ENCODE measurements at regions of chr19 and their contacts with region 1.

Region 1: GRCh38 chr19:8580710-8581281 is 3.6 kb upstream of the MYO1F start:
- DNase-seq: no peak
- H3K4me3 ChIP-seq: no peak overlapping the region
- H3K27ac ChIP-seq: no peak overlapping the region
- H3K27me3 ChIP-seq: peaks cover 4% of the 10 kb centered on the region
- CTCF ChIP-seq: peak; percentile 98

Region 2: GRCh38 chr19:8269724-8270123 is 311.1 kb before region 1 on chr19:
- CTCF ChIA-PET with region 1: interaction called, 15 read pairs
- POLR2A ChIA-PET with region 1: no interaction called
- DNase-seq: no peak
- H3K4me3 ChIP-seq: no peak overlapping the region
- H3K27ac ChIP-seq: no peak overlapping the region
- H3K27me3 ChIP-seq: peaks cover 2% of the 10 kb centered on the region
- CTCF ChIP-seq: no peak

Region 3: GRCh38 chr19:8423817-8424223 is 157.0 kb before region 1 on chr19:
- CTCF ChIA-PET with region 1: interaction called, 11 read pairs
- POLR2A ChIA-PET with region 1: interaction called, 3 read pairs
- DNase-seq: peak; percentile 85
- H3K4me3 ChIP-seq: no peak overlapping the region
- H3K27ac ChIP-seq: no peak overlapping the region
- H3K27me3 ChIP-seq: no peaks in the 10 kb centered on the region
- CTCF ChIP-seq: no peak

Region 4: DNA sequence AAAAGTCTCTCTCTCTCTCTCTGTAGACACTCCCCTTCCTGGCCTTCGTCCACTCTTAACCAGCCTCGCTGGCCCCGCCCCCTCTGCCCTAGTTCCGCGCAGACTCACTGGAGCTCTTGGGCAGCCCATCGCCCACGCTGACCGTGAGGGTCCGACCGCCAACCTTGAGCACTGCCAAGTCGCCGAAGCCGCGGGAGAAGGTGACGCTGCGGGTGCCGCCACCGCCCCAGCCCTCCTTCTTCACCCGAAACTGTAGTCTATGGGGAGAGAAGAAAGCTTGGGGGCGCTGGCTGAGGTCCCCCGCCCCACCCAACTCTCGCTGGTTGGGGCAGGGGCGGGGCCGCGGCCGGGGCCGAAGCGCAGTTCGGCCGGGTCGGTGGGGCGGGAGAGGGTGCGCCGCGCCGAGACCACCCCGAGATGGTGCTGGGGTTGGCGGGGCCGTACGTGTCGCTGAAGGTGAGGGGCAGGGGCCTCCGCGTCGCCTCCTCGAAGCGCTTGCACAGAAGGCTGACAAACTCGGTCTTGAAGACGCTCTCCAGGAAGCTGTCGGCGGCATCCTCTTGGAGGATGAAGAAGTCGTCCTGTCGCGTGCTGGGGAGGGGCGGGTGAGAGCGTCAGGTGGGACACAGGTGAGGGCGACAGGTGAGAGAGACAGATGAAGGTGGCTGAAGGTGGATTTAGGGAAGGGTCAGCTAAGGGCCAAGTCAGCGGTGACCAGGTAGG is 54.3 kb before region 1 on chr19:
- CTCF ChIA-PET with region 1: interaction called, 22 read pairs
- POLR2A ChIA-PET with region 1: interaction called, 4 read pairs
- DNase-seq: peak; percentile 78
- H3K4me3 ChIP-seq: peak overlapping the region; percentile 88
- H3K27ac ChIP-seq: peak overlapping the region; percentile 93
- H3K27me3 ChIP-seq: no peaks in the 10 kb centered on the region
- CTCF ChIP-seq: no peak

Region 5: DNA sequence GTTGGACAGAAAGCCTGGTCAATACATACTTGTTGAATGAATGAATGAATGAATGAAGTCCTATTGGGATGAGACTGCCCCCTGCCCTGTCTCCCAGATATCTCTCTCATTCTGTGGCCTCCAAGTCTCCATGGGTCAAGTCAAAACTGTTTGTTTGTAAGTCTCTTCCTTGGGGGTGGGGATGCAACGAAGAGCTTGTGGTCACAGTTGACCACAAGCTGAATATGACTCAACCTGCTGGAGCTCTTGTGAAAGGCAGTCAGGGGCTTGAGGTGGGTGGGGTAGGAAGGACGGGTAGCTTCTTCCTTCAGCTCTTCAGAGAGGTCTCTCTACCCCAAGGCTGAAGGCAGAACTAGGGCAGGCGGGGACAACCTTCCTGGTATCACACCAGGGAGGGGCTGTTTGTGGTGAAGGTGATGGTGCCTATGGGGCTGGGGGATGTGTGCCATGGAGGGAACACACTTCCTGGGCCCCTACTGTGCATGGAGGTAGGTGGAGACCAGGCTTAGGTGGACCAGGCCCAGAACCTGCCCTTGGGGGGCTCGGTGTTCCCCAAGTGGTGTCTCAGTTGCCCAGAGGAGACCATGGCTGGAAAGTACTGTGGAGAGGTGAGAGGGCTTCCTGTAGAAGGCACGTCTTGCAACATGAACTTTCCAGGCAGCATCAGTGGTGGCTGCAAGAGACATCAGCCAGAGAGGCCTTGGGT is 11.6 kb before region 1 on chr19:
- CTCF ChIA-PET with region 1: interaction called, 56 read pairs
- POLR2A ChIA-PET with region 1: no interaction called
- DNase-seq: peak; percentile 90
- H3K4me3 ChIP-seq: no peak overlapping the region
- H3K27ac ChIP-seq: peak overlapping the region; percentile 31
- H3K27me3 ChIP-seq: no peaks in the 10 kb centered on the region
- CTCF ChIP-seq: no peak

Region 6: DNA sequence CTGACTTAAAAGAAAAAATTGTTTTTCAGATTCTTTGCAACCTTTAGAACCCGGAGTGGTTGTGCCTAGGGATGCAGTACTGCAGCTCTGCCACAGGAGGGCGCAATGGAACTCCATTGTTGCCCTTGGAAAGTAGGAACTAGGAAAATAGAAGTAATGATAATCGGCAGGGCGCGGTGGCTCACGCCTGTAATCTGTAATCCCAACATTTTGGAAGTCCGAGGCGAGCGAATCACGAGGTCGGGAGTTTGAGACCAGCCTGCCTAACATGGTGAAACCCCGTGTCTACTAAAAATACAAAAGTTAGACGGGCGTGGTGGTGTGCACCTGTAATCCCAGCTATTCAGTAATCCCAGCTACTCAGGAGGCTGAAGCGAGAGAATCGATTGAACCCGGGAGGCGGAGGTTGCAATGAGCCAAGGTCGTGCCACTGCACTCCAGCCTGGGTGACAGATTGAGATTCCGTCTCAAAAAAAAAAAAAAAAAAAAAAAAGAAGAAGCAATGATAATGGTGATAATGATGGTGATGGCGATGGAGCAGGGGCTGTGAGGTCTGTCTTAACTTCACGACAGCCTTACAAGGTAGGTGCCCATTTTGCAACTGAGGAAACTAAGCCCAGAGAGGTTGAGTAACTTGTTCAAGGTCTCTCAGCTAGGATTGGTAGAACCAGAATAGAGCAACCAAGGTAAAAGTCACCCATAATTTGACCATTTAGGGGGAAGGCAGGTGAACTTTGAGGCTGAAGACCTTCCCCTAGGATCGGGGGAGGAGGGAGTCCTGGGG is 35.2 kb after region 1 on chr19:
- CTCF ChIA-PET with region 1: interaction called, 11 read pairs
- POLR2A ChIA-PET with region 1: no interaction called
- DNase-seq: no peak
- H3K4me3 ChIP-seq: no peak overlapping the region
- H3K27ac ChIP-seq: no peak overlapping the region
- H3K27me3 ChIP-seq: no peaks in the 10 kb centered on the region
- CTCF ChIP-seq: peak; percentile 93

Region 7: DNA sequence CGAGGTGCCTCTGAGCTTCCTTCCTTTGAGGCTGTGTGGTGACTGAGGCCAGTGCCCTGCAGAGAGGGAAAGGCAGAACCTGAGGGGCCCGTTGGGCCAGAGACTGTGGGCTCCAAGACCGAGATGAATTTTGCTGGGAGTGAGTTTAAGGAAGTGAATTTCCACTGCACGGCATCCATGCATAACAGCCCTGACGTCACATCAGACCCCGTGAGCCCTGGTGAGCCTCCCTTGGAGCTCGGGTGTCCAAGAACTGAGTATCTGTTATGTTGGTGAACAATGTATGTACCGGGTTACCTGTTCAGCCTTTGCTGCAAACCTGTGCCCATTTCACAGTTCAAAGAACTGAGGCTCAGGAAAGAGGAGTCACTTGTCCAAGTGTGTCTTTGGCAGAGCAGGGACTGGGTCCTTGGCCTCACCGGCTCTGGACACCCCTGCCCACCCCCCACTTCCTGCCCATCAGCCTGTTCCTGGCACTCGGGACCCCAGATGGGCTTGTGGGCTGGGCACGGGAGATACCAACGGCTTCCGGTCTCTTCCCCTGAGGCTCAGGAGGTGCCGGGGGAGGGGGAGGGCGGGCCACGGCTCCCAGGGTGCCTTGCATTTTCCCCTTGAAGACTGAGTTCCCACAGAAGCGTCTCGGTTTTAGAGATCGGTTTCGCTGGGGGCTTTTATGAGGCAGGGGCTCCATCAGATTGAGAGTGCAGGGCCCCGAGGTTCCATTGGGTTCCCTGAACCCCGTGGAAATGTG is 83.3 kb after region 1 on chr19:
- CTCF ChIA-PET with region 1: no interaction called
- POLR2A ChIA-PET with region 1: no interaction called
- DNase-seq: no peak
- H3K4me3 ChIP-seq: no peak overlapping the region
- H3K27ac ChIP-seq: no peak overlapping the region
- H3K27me3 ChIP-seq: no peaks in the 10 kb centered on the region
- CTCF ChIP-seq: no peak

Region 8: GRCh38 chr19:8705742-8706141 is 124.9 kb after region 1 on chr19:
- CTCF ChIA-PET with region 1: no interaction called
- POLR2A ChIA-PET with region 1: no interaction called
- DNase-seq: no peak
- H3K4me3 ChIP-seq: no peak overlapping the region
- H3K27ac ChIP-seq: no peak overlapping the region
- H3K27me3 ChIP-seq: no peaks in the 10 kb centered on the region
- CTCF ChIP-seq: no peak

Measured in AG04450 (cell line).